T-cell (primary cell): ENCODE measurements at regions of chr15 and their contacts with region 1.

Region 1: DNA sequence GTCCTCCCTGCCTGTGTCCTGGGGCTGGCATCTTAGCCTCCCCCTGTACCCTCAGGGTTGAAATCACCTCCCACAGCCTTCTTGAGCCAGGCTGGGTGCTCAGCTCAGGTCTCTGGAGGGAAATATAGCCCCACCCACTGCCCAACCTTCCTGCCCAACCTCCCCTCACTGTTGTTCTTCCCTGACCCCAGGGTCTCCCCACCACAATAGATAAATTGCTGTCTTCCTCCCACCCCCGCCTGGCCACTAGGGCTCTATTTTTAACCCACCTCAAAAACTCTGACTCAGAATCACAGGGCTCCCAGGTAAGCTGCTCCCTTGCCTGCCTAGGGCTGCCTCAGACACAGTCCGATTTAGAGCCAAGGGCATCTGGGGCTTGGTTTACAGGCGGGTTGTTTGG is 15.0 kb downstream of the HCN4 start:
- DNase-seq: no peak
- ATAC-seq: no peak
- H3K4me3 ChIP-seq: no peak overlapping the region
- H3K4me3 Mint-ChIP-seq: no peak overlapping the region
- H3K27ac ChIP-seq: no peak overlapping the region
- H3K27ac Mint-ChIP-seq: no peak overlapping the region
- H3K4me1 ChIP-seq: no peaks in the 10 kb centered on the region
- H3K4me1 Mint-ChIP-seq: no peaks in the 10 kb centered on the region
- H3K27me3 ChIP-seq: peaks cover 0 to 40% of the 10 kb centered on the region in 2 experiments
- H3K27me3 Mint-ChIP-seq: peaks cover 3 to 27% of the 10 kb centered on the region in 2 donors

Region 2: GRCh38 chr15:72813345-72814004 is 540.3 kb before region 1 on chr15:
- CTCF ChIA-PET with region 1: no interaction called
- POLR2A ChIA-PET with region 1: interaction called in 1 of 2 experiments, 12 read pairs
- DNase-seq: no peak
- ATAC-seq: no peak
- H3K4me3 ChIP-seq: no peak overlapping the region
- H3K4me3 Mint-ChIP-seq: no peak overlapping the region
- H3K27ac ChIP-seq: no peak overlapping the region
- H3K27ac Mint-ChIP-seq: no peak overlapping the region
- H3K4me1 ChIP-seq: peaks cover 0 to 19% of the 10 kb centered on the region in 2 experiments
- H3K4me1 Mint-ChIP-seq: peaks cover 0 to 15% (median 11%) of the 10 kb centered on the region in 3 donors
- H3K27me3 ChIP-seq: peaks cover 0 to 14% of the 10 kb centered on the region in 2 experiments
- H3K27me3 Mint-ChIP-seq: peaks cover 9 to 11% of the 10 kb centered on the region in 2 donors

Region 3: GRCh38 chr15:73517566-73517965 is 163.8 kb after region 1 on chr15:
- CTCF ChIA-PET with region 1: no interaction called
- POLR2A ChIA-PET with region 1: no interaction called
- DNase-seq: no peak
- ATAC-seq: no peak
- H3K4me3 ChIP-seq: no peak overlapping the region
- H3K4me3 Mint-ChIP-seq: no peak overlapping the region
- H3K27ac ChIP-seq: no peak overlapping the region
- H3K27ac Mint-ChIP-seq: no peak overlapping the region
- H3K4me1 ChIP-seq: peaks cover 0 to 6% of the 10 kb centered on the region in 2 experiments
- H3K4me1 Mint-ChIP-seq: peaks cover 0 to 14% (median 1%) of the 10 kb centered on the region in 3 donors
- H3K27me3 ChIP-seq: peaks cover 0 to 2% of the 10 kb centered on the region in 2 experiments
- H3K27me3 Mint-ChIP-seq: peaks cover 1 to 4% of the 10 kb centered on the region in 2 donors